ENCODE measurements at regions of chr2 and their contacts with region 1.

Region 1: GRCh38 chr2:201786471-201786870 is 5.7 kb upstream of the ALS2 start:
- DNase-seq: no peak
- H3K4me3 ChIP-seq: no peak overlapping the region
- H3K27ac ChIP-seq: no peak overlapping the region
- H3K4me1 ChIP-seq: peaks cover 4% of the 10 kb centered on the region
- H3K27me3 ChIP-seq: no peaks in the 10 kb centered on the region
- CTCF ChIP-seq: no peak

Region 2: GRCh38 chr2:201768918-201769317 is 17.6 kb before region 1 on chr2:
- CTCF ChIA-PET with region 1: interaction called, 14 read pairs
- dilution Hi-C with region 1: no loop called
- in situ Hi-C with region 1: no loop called
- intact Hi-C with region 1: no loop called
- DNase-seq: no peak
- H3K4me3 ChIP-seq: no peak overlapping the region
- H3K27ac ChIP-seq: no peak overlapping the region
- H3K4me1 ChIP-seq: no peaks in the 10 kb centered on the region
- H3K27me3 ChIP-seq: no peaks in the 10 kb centered on the region
- CTCF ChIP-seq: no peak